Heart right ventricle (tissue), 16 donors: ENCODE measurements at regions of chr4 and their contacts with region 1.

Region 1: DNA sequence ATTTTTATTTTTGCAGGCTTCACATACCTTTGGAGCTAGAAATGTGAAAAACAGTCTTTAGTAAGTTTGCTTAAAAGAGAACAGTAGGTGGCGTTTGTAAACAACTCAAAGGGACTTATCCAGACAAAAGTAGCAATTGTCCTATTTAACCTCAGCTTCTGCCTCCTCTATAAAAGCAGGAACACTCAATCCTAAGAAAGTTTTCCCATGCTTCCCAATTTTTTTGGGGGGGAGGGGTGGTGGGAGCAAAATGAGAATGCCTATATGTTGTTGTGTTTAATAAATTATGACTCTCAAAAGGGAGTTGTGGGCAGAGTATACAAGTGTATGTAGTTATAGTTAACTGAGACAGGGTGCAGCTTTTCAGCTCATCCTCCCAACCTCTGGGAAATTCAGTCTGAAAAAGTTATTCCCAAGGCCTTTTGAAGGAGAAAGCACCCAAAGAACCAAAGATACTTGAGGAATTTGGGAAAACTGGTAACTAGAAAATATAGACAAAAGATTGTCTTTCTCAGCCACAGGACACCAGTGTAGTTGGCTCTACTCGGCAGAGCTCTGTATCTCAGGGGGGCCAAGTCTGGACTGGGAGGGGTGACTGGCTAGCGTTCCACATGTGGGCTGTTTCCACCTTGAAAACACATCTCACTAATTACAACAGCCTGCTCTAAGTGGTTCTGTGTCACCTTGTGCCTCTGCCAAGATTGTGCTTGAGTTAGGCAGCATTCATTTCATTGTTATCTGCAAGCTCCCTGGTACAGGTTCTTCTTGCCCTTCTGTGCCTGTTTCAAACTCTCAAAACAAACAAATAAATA is 2.8 kb downstream of the SFRP2 start:
- DNase-seq: no peak
- ATAC-seq: no peak
- H3K4me3 ChIP-seq: no peak overlapping the region
- H3K27ac ChIP-seq: no peak overlapping the region
- H3K4me1 ChIP-seq: peaks cover 2 to 25% (median 18%) of the 10 kb centered on the region in 9 donors
- H3K27me3 ChIP-seq: peaks cover 24 to 100% (median 85%) of the 10 kb centered on the region in 7 donors
- CTCF ChIP-seq: peak in 7 of 9 donors; percentile 23 to 51 (median 40)

Region 2: DNA sequence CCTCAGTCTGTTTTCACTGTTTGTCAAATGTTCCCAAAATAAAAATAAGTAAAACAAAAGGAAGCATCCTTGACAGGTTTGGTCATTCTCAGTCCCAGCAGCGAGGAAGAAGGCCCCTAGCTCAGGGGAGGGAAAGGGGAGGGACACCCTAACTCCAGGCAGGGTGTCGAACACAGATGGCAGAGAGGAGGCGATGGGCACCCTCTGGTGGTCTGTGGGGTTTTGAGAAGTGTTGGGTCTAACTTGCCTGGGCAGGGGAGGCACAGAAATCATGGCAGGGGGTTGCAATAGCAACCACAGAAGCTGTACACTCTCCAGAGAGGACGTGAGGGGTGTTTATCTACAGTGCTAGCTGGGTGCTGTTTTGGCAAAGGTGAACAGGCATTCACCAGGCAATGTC is 232.5 kb after region 1 on chr4:
- intact Hi-C with region 1: loop called in 3 of 10 experiments (anchors 5 to 10 kb)
- DNase-seq: no peak
- ATAC-seq: no peak
- H3K4me3 ChIP-seq: no peak overlapping the region
- H3K27ac ChIP-seq: no peak overlapping the region
- H3K4me1 ChIP-seq: no peaks in the 10 kb centered on the region
- H3K27me3 ChIP-seq: peaks cover 0 to 7% (median 0%) of the 10 kb centered on the region in 7 donors
- CTCF ChIP-seq: peak in 2 of 9 donors; percentile 8 to 17

Region 3: GRCh38 chr4:154314248-154314647 is 528.1 kb after region 1 on chr4:
- intact Hi-C with region 1: loop called in 1 of 10 experiments (anchors 10 kb)
- DNase-seq: no peak
- ATAC-seq: no peak
- H3K4me3 ChIP-seq: no peak overlapping the region
- H3K27ac ChIP-seq: no peak overlapping the region
- H3K4me1 ChIP-seq: no peaks in the 10 kb centered on the region
- H3K27me3 ChIP-seq: peaks cover 0 to 4% (median 0%) of the 10 kb centered on the region in 7 donors
- CTCF ChIP-seq: peak in 3 of 9 donors; percentile 10 to 31 (median 28)